ENCODE measurements at regions of chr3 and their contacts with region 1.

Region 1: DNA sequence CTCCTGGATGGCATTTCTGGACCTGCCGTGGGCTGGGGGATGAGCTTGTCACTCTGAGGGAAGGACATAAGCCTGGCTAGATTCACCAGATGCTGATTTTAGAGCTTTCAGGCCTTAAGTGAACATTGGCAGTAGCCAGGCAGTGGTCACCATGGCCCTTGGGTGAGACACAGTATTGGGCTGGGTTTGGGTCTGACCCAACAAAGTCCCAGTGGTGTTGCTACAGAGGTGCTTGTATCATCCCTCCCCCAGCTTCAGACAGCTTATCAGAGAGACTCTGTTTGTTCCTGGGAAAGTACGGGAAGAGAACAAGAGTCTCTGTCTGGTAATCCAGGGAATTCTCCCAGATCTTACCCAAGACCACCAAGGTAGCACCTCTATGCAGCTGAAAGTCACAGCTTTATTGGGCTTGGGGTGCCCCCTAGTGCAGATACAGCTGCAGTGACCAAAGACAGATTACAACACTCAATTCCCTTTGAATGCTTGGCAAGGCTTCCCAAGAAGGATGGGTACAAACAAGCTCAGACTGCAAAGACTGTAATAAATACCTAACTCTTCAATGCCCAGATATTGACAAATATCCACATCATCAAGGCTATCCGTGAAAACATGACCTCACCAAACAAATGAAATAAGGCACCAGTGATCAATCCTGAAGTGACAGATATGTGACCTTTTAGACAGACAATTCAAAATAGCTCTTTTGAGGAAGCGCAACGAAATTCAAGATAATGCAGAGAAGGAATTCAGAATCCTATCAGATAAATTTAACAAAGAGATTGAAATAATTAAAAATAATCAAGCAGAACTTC is 9.9 kb upstream of the RUVBL1 start:
- DNase-seq: peak; percentile 55
- ATAC-seq: no peak
- H3K4me3 Mint-ChIP-seq: no peak overlapping the region
- H3K27ac Mint-ChIP-seq: no peak overlapping the region
- H3K4me1 Mint-ChIP-seq: no peaks in the 10 kb centered on the region
- H3K27me3 Mint-ChIP-seq: no peaks in the 10 kb centered on the region

Region 2: DNA sequence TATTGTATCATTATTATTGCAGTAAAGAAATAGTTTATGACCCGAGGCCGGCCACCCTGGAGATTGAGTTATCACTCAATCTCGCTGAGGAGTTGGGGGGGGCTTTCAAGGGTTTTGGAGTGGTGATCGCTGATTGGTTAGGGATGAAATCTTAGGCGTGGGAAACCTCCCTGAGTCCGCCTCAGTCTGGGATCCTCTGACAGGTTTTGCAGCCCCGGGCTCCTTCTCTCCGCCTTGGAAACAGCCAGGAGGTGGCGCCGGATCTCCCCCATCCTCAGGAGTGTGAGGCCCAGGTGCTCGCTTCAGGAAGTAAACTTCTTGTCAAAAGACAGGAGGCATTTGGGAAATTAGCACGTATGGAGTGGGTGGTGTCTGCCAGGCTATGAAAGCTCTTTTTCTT is 122.3 kb before region 1 on chr3:
- CTCF ChIA-PET with region 1: no interaction called
- POLR2A ChIA-PET with region 1: no interaction called
- intact Hi-C with region 1: loop called in 1 of 2 experiments (anchors 1 kb)
- DNase-seq: peak; percentile 45
- ATAC-seq: peak; percentile 36
- H3K4me3 Mint-ChIP-seq: no peak overlapping the region
- H3K27ac Mint-ChIP-seq: no peak overlapping the region
- H3K4me1 Mint-ChIP-seq: peaks cover 4% of the 10 kb centered on the region
- H3K27me3 Mint-ChIP-seq: peaks cover 9% of the 10 kb centered on the region